ENCODE measurements at regions of chr5 and their contacts with region 1.

Region 1: GRCh38 chr5:110342683-110343082 is 383.8 kb downstream of the TMEM232 start:
- DNase-seq: no peak
- H3K4me3 Mint-ChIP-seq: no peak overlapping the region
- H3K27ac Mint-ChIP-seq: no peak overlapping the region
- H3K4me1 Mint-ChIP-seq: peaks cover 4% of the 10 kb centered on the region
- H3K27me3 Mint-ChIP-seq: no peaks in the 10 kb centered on the region
- CTCF ChIP-seq: no peak

Region 2: DNA sequence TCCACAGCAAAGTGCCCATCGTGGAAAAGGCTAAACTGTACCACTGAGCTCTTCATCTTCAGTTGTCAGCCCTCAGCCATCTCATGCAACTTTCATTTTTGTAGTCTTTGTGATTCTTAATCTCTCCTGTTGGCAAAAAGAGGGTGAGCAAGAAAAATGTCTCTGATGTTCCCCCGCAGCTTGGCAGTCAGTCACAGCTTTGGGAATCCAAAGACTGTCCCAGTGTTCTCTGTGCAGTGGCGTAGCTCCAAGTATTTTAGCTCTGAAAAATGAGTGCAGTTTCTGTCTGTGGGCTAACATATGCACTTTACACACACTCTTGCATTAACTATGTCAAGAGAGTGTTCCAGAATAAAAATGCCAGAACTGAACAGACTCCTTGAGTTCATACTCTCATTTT is 11.6 kb after region 1 on chr5:
- CTCF ChIA-PET with region 1: interaction called, 15 read pairs
- POLR2A ChIA-PET with region 1: interaction called, 4 read pairs
- intact Hi-C with region 1: no loop called
- DNase-seq: no peak
- H3K4me3 Mint-ChIP-seq: no peak overlapping the region
- H3K27ac Mint-ChIP-seq: no peak overlapping the region
- H3K4me1 Mint-ChIP-seq: peaks cover 6% of the 10 kb centered on the region
- H3K27me3 Mint-ChIP-seq: no peaks in the 10 kb centered on the region
- CTCF ChIP-seq: no peak

Region 3: GRCh38 chr5:110625376-110625999 is 282.8 kb after region 1 on chr5:
- CTCF ChIA-PET with region 1: no interaction called
- POLR2A ChIA-PET with region 1: interaction called, 3 read pairs
- intact Hi-C with region 1: loop called (anchors 10 kb)
- DNase-seq: peak; percentile 36
- H3K4me3 Mint-ChIP-seq: no peak overlapping the region
- H3K27ac Mint-ChIP-seq: no peak overlapping the region
- H3K4me1 Mint-ChIP-seq: no peaks in the 10 kb centered on the region
- H3K27me3 Mint-ChIP-seq: peaks cover 24% of the 10 kb centered on the region
- CTCF ChIP-seq: no peak